SK-N-SH (cell line): ENCODE measurements at regions of chr11 and their contacts with region 1.

Region 1: DNA sequence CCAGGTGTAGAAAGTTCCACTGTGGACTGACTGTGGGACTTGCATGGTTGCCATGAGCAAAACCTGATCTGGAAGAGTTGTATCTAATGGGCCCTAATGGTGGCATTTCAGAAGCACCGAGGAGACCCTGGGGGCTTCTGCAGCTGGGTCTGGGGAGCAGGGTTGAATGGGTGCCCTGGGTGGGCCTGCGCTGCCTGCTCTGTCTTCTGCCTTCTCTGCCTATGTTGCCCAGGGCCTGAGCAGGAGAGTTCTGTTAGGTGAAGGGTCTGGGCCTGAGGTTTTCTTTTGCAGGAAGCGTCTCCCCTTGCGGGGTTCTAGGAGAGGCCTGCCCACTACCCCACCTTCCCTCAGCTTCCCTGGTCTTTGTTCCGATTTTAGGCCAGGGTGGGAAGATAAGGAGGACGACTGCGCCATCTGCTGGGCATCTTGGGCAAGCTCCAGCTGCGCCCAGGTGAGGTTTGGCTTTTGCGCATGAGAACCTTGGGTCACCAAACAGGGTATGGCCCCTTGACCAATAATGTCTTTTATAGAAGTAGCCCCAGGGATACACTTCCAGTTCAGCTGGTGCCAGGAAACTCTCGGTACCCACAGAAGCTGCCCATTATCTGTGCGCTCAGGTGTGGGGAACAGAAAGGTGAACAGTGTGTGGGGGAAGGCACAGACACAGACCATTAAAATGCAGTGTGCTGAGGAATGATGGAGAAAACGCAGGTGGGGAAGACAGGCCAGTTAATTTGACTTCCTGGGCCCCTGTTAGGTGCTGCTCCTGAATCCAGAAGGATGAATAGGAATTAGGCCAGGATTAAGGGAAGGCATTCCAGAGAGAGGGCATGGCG is 23.2 kb downstream of the COMMD9 start:
- DNase-seq: peak; percentile 81
- H3K4me3 ChIP-seq: no peak overlapping the region; a peak in 1 of 4 replicates
- H3K27ac ChIP-seq: no peak overlapping the region
- H3K4me1 ChIP-seq: peaks cover 0 to 6% of the 10 kb centered on the region in 2 experiments; a peak in 1 of 4 replicates
- H3K27me3 ChIP-seq: no peaks in the 10 kb centered on the region
- CTCF ChIP-seq: peak; percentile 93
- EP300 ChIP-seq: no peak
- RAD21 ChIP-seq: peak; percentile 91

Region 2: GRCh38 chr11:35617687-35618496 is 648.1 kb before region 1 on chr11 and contains the start of gene FJX1:
- CTCF ChIA-PET with region 1: interaction called, 34 read pairs
- POLR2A ChIA-PET with region 1: interaction called, 4 read pairs
- DNase-seq: peak; percentile 96
- H3K4me3 ChIP-seq: peak within 1 kb of the TSS; percentile 71
- H3K27ac ChIP-seq: peak within 1 kb of the TSS; percentile 73 to 94
- H3K4me1 ChIP-seq: peaks cover 26 to 51% of the 10 kb centered on the region in 2 experiments
- H3K27me3 ChIP-seq: no peaks in the 10 kb centered on the region
- CTCF ChIP-seq: no peak
- EP300 ChIP-seq: no peak
- RAD21 ChIP-seq: peak; percentile 1; the same call in 1 of the 2 replicates
- polyA plus RNA-seq, gene FJX1: 29.8 and 34.5 TPM in 2 replicates

Region 3: GRCh38 chr11:36131721-36132397 is 134.2 kb before region 1 on chr11:
- CTCF ChIA-PET with region 1: interaction called, 22 read pairs
- POLR2A ChIA-PET with region 1: no interaction called
- DNase-seq: peak; percentile 65
- H3K4me3 ChIP-seq: no peak overlapping the region; a peak in 1 of 4 replicates
- H3K27ac ChIP-seq: no peak overlapping the region
- H3K4me1 ChIP-seq: peaks cover 0 to 5% of the 10 kb centered on the region in 2 experiments; a peak in 3 of 4 replicates
- H3K27me3 ChIP-seq: no peaks in the 10 kb centered on the region
- CTCF ChIP-seq: peak; percentile 50
- EP300 ChIP-seq: no peak
- RAD21 ChIP-seq: peak; percentile 74

Region 4: GRCh38 chr11:36278531-36279282 is 12.7 kb after region 1 on chr11:
- CTCF ChIA-PET with region 1: interaction called, 23 read pairs
- POLR2A ChIA-PET with region 1: no interaction called
- DNase-seq: no peak
- H3K4me3 ChIP-seq: no peak overlapping the region
- H3K27ac ChIP-seq: no peak overlapping the region
- H3K4me1 ChIP-seq: no peaks in the 10 kb centered on the region; a peak in 1 of 4 replicates
- H3K27me3 ChIP-seq: no peaks in the 10 kb centered on the region
- CTCF ChIP-seq: no peak
- EP300 ChIP-seq: no peak
- RAD21 ChIP-seq: no peak

Region 5: DNA sequence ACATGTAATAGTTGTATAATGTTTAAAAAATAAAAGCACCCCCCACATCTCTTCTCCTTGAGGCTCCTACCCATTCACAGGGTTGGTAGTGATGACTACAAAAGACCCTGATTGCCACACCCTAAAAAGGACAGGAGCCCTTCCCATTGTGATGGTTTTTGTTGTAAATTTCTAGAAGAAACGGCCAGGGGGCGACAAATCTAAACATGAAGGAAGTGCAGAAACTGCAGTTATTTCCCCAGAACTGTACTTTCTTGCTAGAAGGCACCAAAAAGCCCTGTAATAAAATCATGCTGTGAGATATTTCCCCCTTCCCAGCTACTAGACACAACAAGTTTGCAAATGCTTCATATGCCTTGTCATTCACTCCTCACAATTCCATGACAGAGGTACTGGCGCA is 40.9 kb after region 1 on chr11:
- CTCF ChIA-PET with region 1: no interaction called
- POLR2A ChIA-PET with region 1: no interaction called
- DNase-seq: peak; percentile 37
- H3K4me3 ChIP-seq: no peak overlapping the region
- H3K27ac ChIP-seq: no peak overlapping the region
- H3K4me1 ChIP-seq: no peaks in the 10 kb centered on the region
- H3K27me3 ChIP-seq: no peaks in the 10 kb centered on the region
- CTCF ChIP-seq: peak; percentile 54
- EP300 ChIP-seq: no peak
- RAD21 ChIP-seq: peak; percentile 63

Region 6: GRCh38 chr11:36326524-36327419 is 60.8 kb after region 1 on chr11:
- CTCF ChIA-PET with region 1: no interaction called
- POLR2A ChIA-PET with region 1: no interaction called
- DNase-seq: no peak
- H3K4me3 ChIP-seq: no peak overlapping the region
- H3K27ac ChIP-seq: no peak overlapping the region
- H3K4me1 ChIP-seq: no peaks in the 10 kb centered on the region; a peak in 1 of 4 replicates
- H3K27me3 ChIP-seq: no peaks in the 10 kb centered on the region
- CTCF ChIP-seq: no peak
- EP300 ChIP-seq: no peak
- RAD21 ChIP-seq: no peak